AG04449 (cell line): ENCODE measurements at regions of chr20 and their contacts with region 1.

Region 1: DNA sequence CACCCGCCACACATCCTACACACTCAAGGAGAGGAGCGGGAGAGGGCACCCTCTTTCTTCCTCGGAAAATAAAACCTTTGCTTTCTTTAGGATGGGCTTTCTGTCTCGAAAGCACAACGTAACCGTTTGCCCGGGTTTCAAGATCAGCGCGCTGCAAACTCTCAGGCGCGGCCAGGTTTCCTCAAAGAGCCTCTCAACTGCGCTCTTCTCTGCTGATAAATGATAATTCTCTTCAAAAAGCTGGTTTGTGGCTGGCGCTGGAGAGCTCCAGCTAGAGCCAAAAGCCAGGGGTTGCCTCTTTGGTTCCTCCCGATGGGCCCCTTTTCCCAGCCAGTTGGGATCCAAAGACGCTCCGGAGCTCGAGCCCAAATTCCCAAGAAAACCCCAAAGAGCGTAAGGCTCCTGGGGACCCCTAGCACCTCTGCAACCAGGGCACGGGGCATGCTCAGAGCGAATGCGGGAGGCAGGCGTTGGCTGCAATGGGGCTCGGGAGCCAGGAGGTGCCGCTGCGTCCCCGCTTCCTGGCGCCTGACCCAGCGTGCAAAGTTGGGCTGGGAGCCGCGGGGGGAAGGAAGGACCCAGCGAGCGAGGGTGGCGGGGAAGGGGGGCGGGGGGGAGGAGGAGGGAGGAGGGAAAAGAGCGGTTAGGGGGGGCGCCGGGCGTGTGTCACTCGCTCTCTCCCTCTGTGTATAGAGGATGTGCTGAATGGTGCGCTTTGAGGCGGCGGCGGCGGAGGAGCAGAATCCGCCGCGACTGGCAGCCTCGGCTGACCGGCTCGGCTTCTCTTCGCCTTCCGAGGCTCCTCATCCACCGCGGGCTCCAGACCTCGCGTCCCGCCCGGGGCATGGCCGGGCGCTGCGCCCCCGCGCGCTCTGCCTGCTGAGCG is at the start of gene PLCB1:
- DNase-seq: no peak
- H3K4me3 ChIP-seq: peak within 1 kb of the TSS; percentile 76
- CTCF ChIP-seq: peak; percentile 99

Region 2: DNA sequence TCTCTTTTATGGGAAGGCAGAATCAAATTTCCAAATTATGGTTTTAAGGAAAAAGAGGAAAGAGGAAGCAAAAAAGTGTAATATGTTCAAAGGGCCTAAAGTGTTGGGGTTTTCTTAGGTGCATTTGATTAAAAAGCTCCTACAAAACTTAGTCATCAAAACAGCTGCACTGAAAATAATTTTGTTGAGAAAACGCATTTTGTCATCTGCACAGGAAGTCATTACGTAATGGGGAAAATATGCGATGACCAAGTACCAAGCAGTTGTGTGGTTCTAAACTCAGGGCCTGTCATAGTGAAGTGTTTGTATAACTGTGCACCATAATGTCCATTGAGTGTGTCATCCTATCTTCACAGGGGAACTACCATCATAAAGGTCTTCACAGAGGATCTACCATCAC is 207.1 kb before region 1 on chr20:
- CTCF ChIA-PET with region 1: no interaction called
- POLR2A ChIA-PET with region 1: no interaction called
- DNase-seq: peak; percentile 73
- H3K4me3 ChIP-seq: no peak overlapping the region
- CTCF ChIP-seq: no peak

Region 3: DNA sequence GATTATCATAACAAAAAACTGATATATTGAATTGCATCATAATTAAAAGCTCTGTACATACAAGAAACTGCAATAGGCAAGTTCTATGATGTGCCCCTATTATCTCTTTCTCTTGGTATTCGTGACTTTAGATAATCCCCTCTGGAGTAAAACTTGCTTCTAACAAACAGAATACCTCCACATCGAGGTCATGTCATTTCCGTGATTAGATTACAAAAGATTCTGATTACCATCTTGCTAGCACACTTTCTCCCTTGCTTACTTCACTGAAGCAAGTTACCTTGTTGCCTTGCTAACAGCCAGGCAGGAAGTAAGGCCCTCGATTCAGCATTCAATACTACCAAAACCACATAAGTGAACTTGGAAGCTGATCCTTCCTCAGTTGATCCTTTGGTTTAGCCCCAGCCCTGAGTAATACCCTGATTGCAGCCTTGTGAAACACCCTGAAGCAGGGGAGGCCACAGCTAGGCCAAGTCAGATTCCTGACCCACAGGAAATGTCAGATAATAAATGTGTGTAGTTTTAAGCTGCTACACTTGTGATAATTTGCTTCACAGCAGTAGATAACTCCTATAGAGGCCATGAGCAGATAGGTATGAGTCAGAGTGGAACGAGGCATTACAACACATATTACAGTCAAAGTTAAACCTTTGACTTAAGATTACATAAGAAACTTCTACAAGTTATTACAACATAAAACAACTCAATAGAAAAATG is 58.6 kb before region 1 on chr20:
- CTCF ChIA-PET with region 1: no interaction called
- POLR2A ChIA-PET with region 1: no interaction called
- DNase-seq: no peak
- H3K4me3 ChIP-seq: no peak overlapping the region
- CTCF ChIP-seq: no peak

Region 4: DNA sequence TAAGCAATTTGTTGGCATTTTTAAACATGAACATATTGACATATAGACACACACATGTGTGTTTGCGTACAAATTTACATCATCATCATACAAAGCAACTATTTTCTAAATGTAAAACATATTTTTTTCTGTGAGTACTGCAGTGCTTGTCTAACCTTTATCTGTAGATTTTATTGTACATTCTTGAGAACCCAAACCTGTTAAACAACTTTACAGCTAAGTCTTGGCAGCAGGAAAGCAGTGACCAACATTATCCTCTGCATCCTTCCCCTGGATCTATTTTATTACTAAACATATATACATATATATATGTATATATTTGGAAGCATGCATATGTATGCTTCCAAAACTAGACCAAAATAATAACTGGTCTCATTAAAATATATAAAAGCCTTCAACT is 10.2 kb before region 1 on chr20:
- CTCF ChIA-PET with region 1: interaction called, 11 read pairs
- POLR2A ChIA-PET with region 1: interaction called, 3 read pairs
- DNase-seq: no peak
- H3K4me3 ChIP-seq: no peak overlapping the region
- CTCF ChIP-seq: no peak

Region 5: DNA sequence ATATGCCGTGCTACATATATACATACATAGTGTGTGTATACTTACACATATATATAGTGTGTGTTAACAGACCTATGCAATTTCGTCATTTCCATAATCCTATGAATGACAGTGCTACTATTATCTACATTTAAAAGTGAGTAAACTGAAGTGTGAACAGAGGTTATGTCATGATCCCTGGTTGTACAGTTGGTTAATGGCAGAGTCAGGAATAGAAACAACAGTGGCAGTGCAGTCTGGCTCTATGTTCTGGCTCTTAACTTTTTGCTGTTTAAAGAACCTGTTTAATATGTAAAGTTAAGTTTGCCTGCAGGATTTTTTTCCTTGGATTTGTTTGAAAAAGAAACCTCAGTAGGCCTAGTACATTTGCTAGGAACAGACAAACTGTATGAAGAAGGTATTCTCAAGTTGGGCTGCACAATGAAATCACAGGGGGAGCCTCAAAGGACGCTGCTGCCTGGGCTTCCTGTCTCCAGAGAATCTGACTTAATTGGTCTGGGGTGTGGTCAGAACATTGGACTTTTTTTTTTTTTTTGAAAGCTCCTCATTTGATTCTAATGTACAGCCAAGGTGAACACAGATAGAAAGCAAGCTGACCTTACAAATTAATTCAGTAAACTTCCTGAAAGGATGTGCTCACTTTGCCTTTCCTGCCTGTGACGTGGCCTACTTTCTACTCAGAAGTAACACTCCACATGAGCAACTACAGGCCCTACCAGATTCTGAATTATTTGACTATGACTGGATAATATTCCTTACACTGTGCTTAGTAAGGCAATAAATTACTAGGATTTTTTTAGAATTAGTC is 29.6 kb after region 1 on chr20:
- CTCF ChIA-PET with region 1: no interaction called
- POLR2A ChIA-PET with region 1: no interaction called
- DNase-seq: no peak
- H3K4me3 ChIP-seq: no peak overlapping the region
- CTCF ChIP-seq: no peak

Region 6: GRCh38 chr20:8255945-8256632 is 124.2 kb after region 1 on chr20:
- CTCF ChIA-PET with region 1: no interaction called
- POLR2A ChIA-PET with region 1: no interaction called
- DNase-seq: no peak
- H3K4me3 ChIP-seq: no peak overlapping the region
- CTCF ChIP-seq: no peak

Region 7: GRCh38 chr20:8399947-8400346 is 268.1 kb after region 1 on chr20:
- CTCF ChIA-PET with region 1: interaction called, 10 read pairs
- POLR2A ChIA-PET with region 1: no interaction called
- DNase-seq: no peak
- H3K4me3 ChIP-seq: no peak overlapping the region
- CTCF ChIP-seq: no peak